Activated CD4-positive, alpha-beta memory T cell treated with anti-CD3 and anti-CD28 coated beads, Interleukin-2, amount 10 ng/mL, durations not matched to agents 7 days and 5 days (primary cell): ENCODE measurements at regions of chr7 and their contacts with region 1.

Region 1: GRCh38 chr7:100705753-100706671 is at the start of gene POP7:
- DNase-seq: peak; percentile 99
- H3K4me3 Mint-ChIP-seq: peak within 1 kb of the TSS; percentile 94
- H3K27ac Mint-ChIP-seq: peak within 1 kb of the TSS; percentile 90
- H3K4me1 Mint-ChIP-seq: peaks cover 17% of the 10 kb centered on the region
- H3K27me3 Mint-ChIP-seq: peaks cover 2% of the 10 kb centered on the region
- total RNA-seq, gene POP7: 32.5 to 35.2 TPM

Region 2: GRCh38 chr7:100611974-100612729 is 93.9 kb before region 1 on chr7 and contains the start of gene MOSPD3:
- CTCF ChIA-PET with region 1: interaction called, 12 read pairs
- POLR2A ChIA-PET with region 1: interaction called, 11 read pairs
- DNase-seq: peak; percentile 98
- H3K4me3 Mint-ChIP-seq: peak within 1 kb of the TSS; percentile 95
- H3K27ac Mint-ChIP-seq: peak within 1 kb of the TSS; percentile 99
- H3K4me1 Mint-ChIP-seq: peaks cover 26% of the 10 kb centered on the region
- H3K27me3 Mint-ChIP-seq: peaks cover 2% of the 10 kb centered on the region
- total RNA-seq, gene MOSPD3: 47.2 to 53.3 TPM

Region 3: DNA sequence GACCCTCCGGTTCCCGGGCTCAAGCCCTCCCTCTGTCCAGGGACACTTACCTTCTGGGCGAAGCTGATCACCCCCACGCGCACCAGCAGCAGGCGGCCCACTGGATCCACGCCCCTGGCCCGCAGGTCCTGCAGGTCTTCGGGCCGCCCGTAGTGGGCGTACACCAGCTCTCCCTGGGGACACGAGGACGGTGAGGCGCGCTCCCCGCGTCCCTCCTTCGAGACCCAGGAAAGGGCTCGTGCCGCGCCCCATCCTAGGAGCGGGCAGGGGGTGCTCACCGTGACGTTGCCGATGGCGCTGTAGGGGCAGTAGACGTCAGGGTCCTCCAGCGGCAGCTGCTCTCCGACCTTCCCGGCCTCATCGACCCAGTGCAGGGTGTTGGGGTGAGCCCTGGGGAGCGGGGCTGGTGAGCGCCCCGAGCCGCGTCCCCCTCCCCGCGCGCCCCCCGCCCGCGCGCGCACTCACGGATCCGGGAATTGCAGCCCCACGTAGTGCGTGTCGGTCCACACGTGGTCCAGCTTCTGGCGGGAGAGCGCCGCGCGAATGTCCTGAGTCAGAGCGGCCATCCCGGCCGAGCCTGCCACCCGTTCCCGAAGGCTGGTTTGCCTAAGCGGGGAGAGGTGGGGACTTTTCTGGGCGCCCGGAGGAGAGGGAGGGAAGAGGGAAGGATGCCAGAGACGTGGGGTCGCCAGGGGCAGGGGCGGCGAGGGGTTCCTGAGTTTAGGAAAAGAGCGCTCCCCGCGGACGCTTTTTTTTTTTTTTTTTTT is 72.9 kb before region 1 on chr7:
- CTCF ChIA-PET with region 1: interaction called, 15 read pairs
- POLR2A ChIA-PET with region 1: interaction called, 16 read pairs
- DNase-seq: peak; percentile 70
- H3K4me3 Mint-ChIP-seq: peak overlapping the region; percentile 81
- H3K27ac Mint-ChIP-seq: peak overlapping the region; percentile 79
- H3K4me1 Mint-ChIP-seq: peaks cover 48% of the 10 kb centered on the region
- H3K27me3 Mint-ChIP-seq: peaks cover 6% of the 10 kb centered on the region

Region 4: GRCh38 chr7:100680167-100680575 is 25.8 kb before region 1 on chr7:
- CTCF ChIA-PET with region 1: interaction called, 8 read pairs
- POLR2A ChIA-PET with region 1: interaction called, 17 read pairs
- DNase-seq: no peak
- H3K4me3 Mint-ChIP-seq: no peak overlapping the region
- H3K27ac Mint-ChIP-seq: peak overlapping the region; percentile 31
- H3K4me1 Mint-ChIP-seq: peaks cover 36% of the 10 kb centered on the region
- H3K27me3 Mint-ChIP-seq: no peaks in the 10 kb centered on the region

Region 5: GRCh38 chr7:100719523-100720319 is 13.7 kb after region 1 on chr7:
- CTCF ChIA-PET with region 1: interaction called, 49 read pairs
- POLR2A ChIA-PET with region 1: interaction called, 7 read pairs
- DNase-seq: no peak
- H3K4me3 Mint-ChIP-seq: no peak overlapping the region
- H3K27ac Mint-ChIP-seq: no peak overlapping the region
- H3K4me1 Mint-ChIP-seq: peaks cover 3% of the 10 kb centered on the region
- H3K27me3 Mint-ChIP-seq: peaks cover 49% of the 10 kb centered on the region

Region 6: DNA sequence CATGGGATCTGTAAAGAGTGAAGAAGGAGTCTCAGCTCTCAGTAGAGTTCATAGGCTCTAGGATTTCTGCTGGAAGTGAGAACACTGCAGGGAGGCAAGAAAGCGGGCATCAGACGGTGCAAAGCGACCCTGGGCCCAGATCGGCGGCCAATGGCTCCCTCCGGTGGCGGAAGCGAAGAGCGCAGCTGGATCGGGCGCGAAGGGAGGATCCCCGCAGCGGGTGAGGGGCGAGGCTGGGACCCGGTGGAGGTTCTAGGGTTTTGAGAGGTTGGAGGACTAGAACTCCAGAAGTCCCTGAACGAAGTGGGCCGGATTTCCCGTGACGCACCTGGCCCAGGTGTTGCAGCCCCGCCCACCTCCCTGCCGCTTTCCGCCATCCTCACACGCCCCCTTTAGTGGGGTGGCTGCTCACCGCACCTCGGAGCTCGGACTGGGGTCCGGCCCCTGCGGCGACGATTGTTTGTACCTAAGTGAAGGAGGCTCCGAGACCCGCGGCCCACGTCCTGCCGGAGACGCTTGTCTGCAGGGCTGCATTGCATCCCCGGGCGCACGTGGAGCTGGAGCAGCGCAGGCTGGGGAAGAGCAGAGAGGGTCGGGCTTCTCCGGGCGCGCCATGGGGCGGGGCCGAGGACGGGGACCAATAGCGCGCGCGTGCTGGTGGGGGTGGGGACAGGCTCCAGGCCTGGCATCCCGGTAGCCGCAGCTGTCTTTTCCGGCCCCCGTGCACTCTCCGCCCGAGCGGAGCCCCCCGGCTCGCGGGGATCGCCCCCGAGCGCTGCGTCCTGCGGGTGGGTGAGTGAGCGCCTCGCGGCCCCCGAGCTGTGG is 146.2 kb after region 1 on chr7 and contains the start of gene SLC12A9:
- CTCF ChIA-PET with region 1: interaction called, 91 read pairs
- POLR2A ChIA-PET with region 1: interaction called, 33 read pairs
- DNase-seq: peak; percentile 88
- H3K4me3 Mint-ChIP-seq: peak within 1 kb of the TSS; percentile 93
- H3K27ac Mint-ChIP-seq: peak within 1 kb of the TSS; percentile 49
- H3K4me1 Mint-ChIP-seq: peaks cover 20% of the 10 kb centered on the region
- H3K27me3 Mint-ChIP-seq: no peaks in the 10 kb centered on the region
- total RNA-seq, gene SLC12A9: 34.0 to 36.3 TPM